ENCODE measurements at regions of chr19 and their contacts with region 1.

Region 1: DNA sequence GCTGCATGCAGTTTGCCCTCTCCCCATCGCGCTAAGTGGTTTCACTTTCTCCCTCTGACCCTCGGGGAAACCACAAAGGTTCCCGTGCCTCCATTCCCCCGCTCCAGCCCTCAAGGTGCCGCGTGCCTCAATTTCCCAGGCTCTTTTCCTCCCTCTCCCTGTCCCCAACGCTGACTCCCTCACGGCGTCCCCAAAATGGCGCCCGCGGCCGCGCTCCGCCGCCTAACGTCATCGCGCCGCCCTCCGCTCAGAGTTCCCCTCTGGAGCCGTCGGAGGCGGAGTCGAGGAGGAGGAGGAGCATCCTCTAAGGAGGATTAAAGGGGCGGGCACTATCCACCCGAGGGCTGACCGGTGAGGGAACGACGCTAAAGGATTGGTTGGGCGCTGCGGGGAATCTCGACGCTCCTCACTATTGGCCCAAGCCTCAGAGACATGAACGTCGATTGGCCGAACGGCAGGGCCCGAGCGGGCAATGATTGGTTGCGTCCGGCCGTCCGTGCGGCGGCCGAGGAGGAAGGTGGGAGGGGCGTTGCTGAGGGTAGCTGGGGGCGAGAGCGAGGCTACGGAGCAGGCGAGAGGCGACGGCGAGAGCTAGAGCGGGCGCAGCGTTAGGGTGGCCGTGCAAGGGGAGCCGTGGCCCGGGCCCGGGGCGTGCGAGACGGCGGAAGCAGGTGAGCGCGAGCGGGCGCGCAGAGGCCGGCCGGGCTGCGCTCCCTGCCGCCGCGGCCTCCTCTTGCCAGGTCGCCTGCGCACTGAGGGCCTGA is at the start of gene ZNF574:
- DNase-seq: peak; percentile 91
- ATAC-seq: peak; percentile 95
- H3K4me3 Mint-ChIP-seq: peak within 1 kb of the TSS; percentile 93
- H3K27ac Mint-ChIP-seq: peak within 1 kb of the TSS; percentile 99
- H3K4me1 Mint-ChIP-seq: peaks cover 37% of the 10 kb centered on the region
- H3K27me3 Mint-ChIP-seq: no peaks in the 10 kb centered on the region
- CTCF ChIP-seq: no peak
- total RNA-seq, gene ZNF574: 27.7 and 29.6 TPM in 2 replicates

Region 2: DNA sequence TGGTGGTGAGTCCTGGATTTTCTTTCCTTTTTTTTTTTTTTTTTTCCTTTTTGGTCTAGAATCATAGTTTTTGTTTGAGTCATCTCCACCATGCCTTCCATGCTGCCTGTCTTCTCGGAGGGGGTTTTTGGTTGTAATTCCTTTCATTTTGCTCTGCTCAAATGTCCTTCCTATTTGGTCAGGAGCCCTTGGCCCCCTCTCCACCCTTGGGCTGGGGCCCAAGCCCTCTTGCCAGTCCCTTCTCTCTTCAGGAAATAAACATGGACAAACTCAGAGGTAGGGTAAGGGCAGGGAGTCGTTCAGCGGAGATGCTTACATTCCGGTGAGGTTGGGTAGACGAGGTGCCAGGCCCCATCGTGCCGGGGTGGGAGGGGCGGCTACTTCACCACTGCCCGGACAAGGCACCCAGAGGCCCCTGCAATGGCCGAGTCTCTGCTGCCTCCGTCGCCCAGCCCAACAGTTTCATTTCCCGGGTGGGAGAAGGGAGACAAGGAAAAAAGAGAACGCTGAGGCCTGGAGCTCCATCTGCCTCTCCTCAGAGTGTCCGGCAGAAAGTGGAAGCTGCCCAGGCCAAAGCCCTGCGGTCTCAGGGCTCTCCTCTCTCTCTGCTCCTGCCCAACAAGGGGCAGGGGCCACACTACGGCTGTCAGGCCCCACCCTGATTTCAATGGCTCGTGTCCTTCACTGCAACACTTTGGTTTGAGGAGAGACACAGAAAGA is 12.8 kb after region 1 on chr19:
- CTCF ChIA-PET with region 1: no interaction called
- POLR2A ChIA-PET with region 1: interaction called, 21 read pairs
- intact Hi-C with region 1: loop called (anchors 1 kb)
- DNase-seq: no peak
- ATAC-seq: no peak
- H3K4me3 Mint-ChIP-seq: peak overlapping the region; percentile 11
- H3K27ac Mint-ChIP-seq: peak overlapping the region; percentile 79
- H3K4me1 Mint-ChIP-seq: peaks cover 57% of the 10 kb centered on the region
- H3K27me3 Mint-ChIP-seq: no peaks in the 10 kb centered on the region
- CTCF ChIP-seq: no peak

Region 3: DNA sequence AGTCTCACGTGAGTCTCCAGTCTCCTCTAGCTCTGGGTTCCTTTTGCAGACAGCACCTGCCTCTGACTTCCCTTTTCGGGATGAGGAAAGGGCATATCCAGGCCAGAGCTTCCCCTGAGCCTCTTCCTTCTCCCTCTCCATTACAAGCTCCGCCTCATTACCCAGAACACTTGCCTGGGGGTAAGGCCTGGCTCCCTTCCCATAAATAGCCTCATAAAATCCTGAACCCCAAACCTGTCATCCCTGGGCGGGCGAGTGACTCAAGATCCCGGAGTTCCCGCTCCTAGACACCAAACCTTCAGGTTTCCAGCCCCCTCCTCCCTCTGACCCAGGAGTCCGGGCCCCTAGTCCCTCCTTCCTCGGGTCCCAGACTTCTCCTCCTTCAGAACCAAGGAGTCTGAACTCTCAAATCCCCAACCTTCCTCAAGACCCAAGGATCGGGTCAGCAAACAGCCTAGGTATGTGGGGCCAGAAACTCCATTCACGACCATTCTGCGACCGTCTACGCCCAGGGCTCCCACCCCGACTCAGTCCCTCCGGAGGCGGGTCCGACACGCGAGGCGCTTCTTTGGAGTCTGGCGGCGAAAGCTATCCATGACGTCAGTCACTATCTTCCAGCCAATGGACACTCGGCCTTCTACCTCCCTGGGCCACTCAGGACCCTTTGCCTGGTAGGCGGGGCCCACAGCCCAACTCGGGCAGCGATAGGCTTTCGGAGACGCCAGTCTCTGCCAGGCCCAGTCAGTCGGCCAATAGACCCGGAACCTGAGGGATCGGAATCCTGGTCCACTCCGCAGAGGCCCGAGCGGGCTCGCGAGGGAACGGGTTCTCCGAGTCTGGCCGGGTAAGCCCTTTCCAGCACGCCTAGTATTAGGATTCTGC is 320.8 kb after region 1 on chr19:
- CTCF ChIA-PET with region 1: no interaction called
- POLR2A ChIA-PET with region 1: interaction called, 4 read pairs
- intact Hi-C with region 1: loop called (anchors 2 kb)
- DNase-seq: peak; percentile 96
- ATAC-seq: peak; percentile 96
- H3K4me3 Mint-ChIP-seq: peak overlapping the region; percentile 95
- H3K27ac Mint-ChIP-seq: peak overlapping the region; percentile 89
- H3K4me1 Mint-ChIP-seq: peaks cover 45% of the 10 kb centered on the region
- H3K27me3 Mint-ChIP-seq: peaks cover 5% of the 10 kb centered on the region
- CTCF ChIP-seq: no peak

Region 4: GRCh38 chr19:42471554-42472249 is 395.9 kb after region 1 on chr19:
- CTCF ChIA-PET with region 1: no interaction called
- POLR2A ChIA-PET with region 1: no interaction called
- intact Hi-C with region 1: no loop called
- DNase-seq: no peak
- ATAC-seq: no peak
- H3K4me3 Mint-ChIP-seq: no peak overlapping the region
- H3K27ac Mint-ChIP-seq: no peak overlapping the region
- H3K4me1 Mint-ChIP-seq: peaks cover 22% of the 10 kb centered on the region
- H3K27me3 Mint-ChIP-seq: no peaks in the 10 kb centered on the region
- CTCF ChIP-seq: no peak

Measured in activated B cell treated with CpG ODN at 0.5 μM for 24 hours (primary cell).